HepG2 (cell line): ENCODE measurements at regions of chr10 and their contacts with region 1.

Region 1: GRCh38 chr10:78944723-78945312 is 123.9 kb upstream of the ZMIZ1 start:
- DNase-seq: no peak
- ATAC-seq: peak; percentile 52
- H3K4me3 ChIP-seq: no peak overlapping the region
- H3K27ac ChIP-seq: no peak overlapping the region
- H3K4me1 ChIP-seq: peaks cover 35% of the 10 kb centered on the region
- H3K27me3 ChIP-seq: no peaks in the 10 kb centered on the region
- CTCF ChIP-seq: no peak
- EP300 ChIP-seq: no peak
- POLR2A ChIP-seq: no peak
- RAD21 ChIP-seq: no peak

Region 2: DNA sequence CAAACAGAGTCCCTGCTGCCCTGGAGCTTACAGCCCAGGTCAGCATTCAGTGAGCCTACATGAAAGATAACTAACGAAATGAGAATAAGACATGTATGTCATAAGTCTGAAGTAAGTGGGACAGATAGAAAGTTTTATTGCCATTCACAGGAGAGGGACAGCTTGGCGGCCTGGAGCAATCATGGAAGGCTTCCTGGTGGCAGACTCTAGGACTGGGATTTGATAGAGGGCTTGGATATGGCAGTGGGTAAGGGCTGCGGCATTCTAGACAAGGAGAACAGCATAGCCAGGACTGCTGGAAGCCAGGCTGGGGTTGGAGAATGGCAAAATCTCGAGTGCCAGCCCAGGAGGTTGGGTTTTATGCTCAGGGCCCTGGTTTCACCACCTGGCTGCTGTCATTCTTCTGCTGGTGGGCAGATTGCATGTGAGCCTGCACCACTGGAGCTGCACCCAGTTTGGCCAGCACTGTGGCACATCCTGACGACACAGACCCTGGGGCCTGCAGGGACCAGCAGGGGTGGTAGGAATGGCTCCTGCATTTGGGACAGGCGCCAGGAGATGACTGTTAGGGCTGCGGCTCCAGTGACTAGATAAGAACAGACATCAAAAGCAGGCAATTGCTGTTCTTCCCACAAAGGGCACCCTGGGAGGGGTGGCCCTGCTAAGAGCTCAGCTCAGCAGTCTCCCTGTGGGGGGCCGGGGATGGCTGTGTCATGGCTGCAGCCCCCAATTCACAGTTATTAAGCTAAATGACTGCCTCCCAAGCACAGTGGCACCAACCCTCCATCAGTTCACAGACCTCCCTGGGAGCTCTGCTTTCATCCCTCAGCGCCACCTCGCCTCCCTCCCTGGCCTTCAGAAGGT is 750.0 kb before region 1 on chr10:
- CTCF ChIA-PET with region 1: no interaction called
- POLR2A ChIA-PET with region 1: no interaction called
- in situ Hi-C with region 1: no loop called
- intact Hi-C with region 1: loop called (anchors 5 kb)
- DNase-seq: no peak
- ATAC-seq: no peak
- H3K4me3 ChIP-seq: no peak overlapping the region
- H3K27ac ChIP-seq: no peak overlapping the region
- H3K4me1 ChIP-seq: no peaks in the 10 kb centered on the region
- H3K27me3 ChIP-seq: peaks cover 3 to 14% of the 10 kb centered on the region in 2 experiments; a peak in 3 of 5 replicates
- CTCF ChIP-seq: no peak
- EP300 ChIP-seq: no peak
- POLR2A ChIP-seq: no peak
- RAD21 ChIP-seq: no peak

Region 3: GRCh38 chr10:78960316-78960800 is 15.5 kb after region 1 on chr10:
- CTCF ChIA-PET with region 1: no interaction called
- POLR2A ChIA-PET with region 1: interaction called, 24 read pairs
- in situ Hi-C with region 1: no loop called
- intact Hi-C with region 1: no loop called
- DNase-seq: no peak
- ATAC-seq: no peak
- H3K4me3 ChIP-seq: no peak overlapping the region
- H3K27ac ChIP-seq: no peak overlapping the region
- H3K4me1 ChIP-seq: peaks cover 44% of the 10 kb centered on the region
- H3K27me3 ChIP-seq: no peaks in the 10 kb centered on the region
- CTCF ChIP-seq: no peak
- EP300 ChIP-seq: no peak
- POLR2A ChIP-seq: no peak
- RAD21 ChIP-seq: no peak